ENCODE measurements at regions of chr6 and their contacts with region 1.

Region 1: DNA sequence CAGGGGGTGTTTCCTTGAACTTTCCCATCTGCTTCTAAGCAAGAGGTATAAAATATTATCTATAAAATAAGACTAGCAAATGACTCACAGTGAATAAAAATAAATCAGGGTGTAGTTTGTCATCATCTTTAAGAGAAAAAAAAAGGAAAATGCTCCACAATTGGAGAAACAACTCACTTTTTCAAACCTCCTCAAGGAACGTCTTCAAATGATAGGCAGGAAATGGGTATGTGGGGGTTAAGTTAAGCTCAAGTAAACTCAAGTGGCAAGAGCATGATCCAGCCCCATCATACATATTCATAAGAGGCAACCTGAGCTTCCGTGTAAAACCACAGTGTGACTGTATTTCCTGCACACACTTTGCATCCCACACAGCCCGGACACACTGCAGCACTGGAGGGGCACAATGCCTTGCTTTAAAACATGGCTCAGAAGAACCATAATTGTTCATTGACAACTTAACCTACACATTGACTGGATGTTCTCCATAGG is 58.5 kb upstream of the CEP85L start:
- DNase-seq: no peak
- ATAC-seq: no peak

Region 2: GRCh38 chr6:118668761-118669385 is 41.0 kb before region 1 on chr6:
- intact Hi-C with region 1: loop called (anchors 5 kb)
- DNase-seq: no peak
- ATAC-seq: no peak

Measured in Right ventricle myocardium inferior (tissue), 1 donor.